ENCODE measurements at regions of chr11 and their contacts with region 1.

Region 1: DNA sequence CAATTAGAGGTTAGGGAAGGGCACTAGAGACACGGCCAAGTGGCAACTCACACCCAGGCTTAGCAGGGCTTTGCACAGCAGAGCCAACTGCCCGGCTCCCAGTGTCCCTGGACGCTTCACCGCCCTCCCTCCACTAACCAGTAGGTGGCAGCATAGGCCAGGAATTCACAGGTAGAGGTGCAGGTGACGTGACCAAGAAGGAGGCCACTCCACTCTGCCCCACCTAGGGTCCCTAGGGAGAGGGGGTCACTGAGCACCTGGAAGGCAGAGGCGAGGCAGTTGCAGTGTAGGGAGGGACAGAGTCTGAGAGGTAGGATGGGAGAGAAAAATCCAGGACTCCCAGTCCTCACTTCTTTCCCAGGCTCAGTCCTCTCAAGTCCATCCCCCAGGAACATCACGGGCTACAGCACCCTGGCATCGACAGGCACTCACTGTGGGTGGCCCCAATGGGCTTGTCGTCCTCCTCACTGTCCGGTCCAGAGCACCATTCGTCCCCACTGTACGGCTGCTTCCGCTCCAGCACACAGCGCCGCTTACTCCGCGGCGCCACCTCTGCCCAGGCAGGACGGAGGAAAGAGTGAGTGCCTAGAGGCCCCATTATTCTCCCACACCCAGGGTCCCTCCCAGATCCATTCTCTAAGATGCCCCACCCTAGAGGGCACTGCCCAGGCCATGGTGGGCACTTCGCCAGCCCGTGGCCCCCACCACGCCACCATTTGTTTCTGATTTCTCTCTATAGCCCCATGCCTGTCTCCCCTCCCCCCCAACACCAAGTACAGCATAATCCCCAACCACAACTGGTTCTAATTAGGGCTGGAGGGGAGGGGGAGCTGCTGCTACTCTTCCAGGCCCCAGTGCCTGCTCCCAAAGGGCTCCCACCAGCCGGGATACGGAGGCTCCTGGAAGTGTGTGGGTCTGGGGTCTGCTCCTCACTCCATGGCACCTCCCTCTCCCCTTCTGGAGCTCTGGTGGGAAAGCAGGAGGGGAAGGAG is 18.4 kb downstream of the BCL9L start:
- DNase-seq: peak; percentile 73 to 91 (median 82)
- ATAC-seq: peak; percentile 83
- H3K4me3 ChIP-seq: no peak overlapping the region
- H3K4me3 Mint-ChIP-seq: peak overlapping the region in 9 of 10 donors; percentile 15 to 99 (median 56)
- H3K27ac ChIP-seq: peak overlapping the region; percentile 96
- H3K27ac Mint-ChIP-seq: peak overlapping the region; percentile 80 to 96 (median 93)
- H3K4me1 ChIP-seq: peaks cover 28 to 50% of the 10 kb centered on the region in 2 donors
- H3K4me1 Mint-ChIP-seq: peaks cover 30 to 53% (median 46%) of the 10 kb centered on the region in 7 donors
- H3K27me3 ChIP-seq: no peaks in the 10 kb centered on the region
- H3K27me3 Mint-ChIP-seq: no peaks in the 10 kb centered on the region

Region 2: GRCh38 chr11:118033443-118033842 is 873.9 kb before region 1 on chr11:
- CTCF ChIA-PET with region 1: no interaction called
- POLR2A ChIA-PET with region 1: no interaction called
- intact Hi-C with region 1: no loop called
- DNase-seq: no peak
- ATAC-seq: no peak
- H3K4me3 ChIP-seq: no peak overlapping the region
- H3K4me3 Mint-ChIP-seq: no peak overlapping the region
- H3K27ac ChIP-seq: no peak overlapping the region
- H3K27ac Mint-ChIP-seq: peak overlapping the region in 2 of 9 donors; percentile 63 to 70
- H3K4me1 ChIP-seq: peaks cover 0 to 12% of the 10 kb centered on the region in 2 donors
- H3K4me1 Mint-ChIP-seq: peaks cover 11 to 36% (median 18%) of the 10 kb centered on the region in 7 donors
- H3K27me3 ChIP-seq: no peaks in the 10 kb centered on the region
- H3K27me3 Mint-ChIP-seq: peaks cover 0 to 4% (median 0%) of the 10 kb centered on the region in 5 donors

Region 3: GRCh38 chr11:118705111-118705741 is 202.1 kb before region 1 on chr11:
- CTCF ChIA-PET with region 1: no interaction called
- POLR2A ChIA-PET with region 1: interaction called, 12 read pairs
- intact Hi-C with region 1: no loop called
- DNase-seq: peak in 7 of 9 donors; percentile 50 to 72 (median 63)
- ATAC-seq: peak; percentile 79
- H3K4me3 ChIP-seq: no peak overlapping the region
- H3K4me3 Mint-ChIP-seq: peak overlapping the region; percentile 67 to 84 (median 76)
- H3K27ac ChIP-seq: peak overlapping the region; percentile 62
- H3K27ac Mint-ChIP-seq: peak overlapping the region; percentile 49 to 99 (median 95)
- H3K4me1 ChIP-seq: peaks cover 28 to 41% of the 10 kb centered on the region in 2 donors
- H3K4me1 Mint-ChIP-seq: peaks cover 20 to 63% (median 47%) of the 10 kb centered on the region in 7 donors
- H3K27me3 ChIP-seq: no peaks in the 10 kb centered on the region
- H3K27me3 Mint-ChIP-seq: peaks cover 0 to 8% (median 0%) of the 10 kb centered on the region in 5 donors

Region 4: GRCh38 chr11:118820412-118821357 is 86.7 kb before region 1 on chr11:
- CTCF ChIA-PET with region 1: no interaction called
- POLR2A ChIA-PET with region 1: no interaction called
- intact Hi-C with region 1: no loop called
- DNase-seq: no peak
- ATAC-seq: peak; percentile 55
- H3K4me3 ChIP-seq: no peak overlapping the region
- H3K4me3 Mint-ChIP-seq: peak overlapping the region in 2 of 10 donors; percentile 9 to 13
- H3K27ac ChIP-seq: no peak overlapping the region
- H3K27ac Mint-ChIP-seq: peak overlapping the region in 1 of 9 donors; percentile 25
- H3K4me1 ChIP-seq: no peaks in the 10 kb centered on the region
- H3K4me1 Mint-ChIP-seq: peaks cover 0 to 4% (median 0%) of the 10 kb centered on the region in 7 donors
- H3K27me3 ChIP-seq: no peaks in the 10 kb centered on the region
- H3K27me3 Mint-ChIP-seq: no peaks in the 10 kb centered on the region

Region 5: GRCh38 chr11:118870396-118871345 is 36.7 kb before region 1 on chr11:
- CTCF ChIA-PET with region 1: interaction called, 4 read pairs
- POLR2A ChIA-PET with region 1: interaction called, 28 read pairs
- intact Hi-C with region 1: no loop called
- DNase-seq: peak in 6 of 9 donors; percentile 44 to 54 (median 51)
- ATAC-seq: peak; percentile 28
- H3K4me3 ChIP-seq: peak overlapping the region; percentile 60
- H3K4me3 Mint-ChIP-seq: peak overlapping the region; percentile 67 to 91 (median 82)
- H3K27ac ChIP-seq: peak overlapping the region; percentile 94
- H3K27ac Mint-ChIP-seq: peak overlapping the region; percentile 94 to 100 (median 99)
- H3K4me1 ChIP-seq: peaks cover 51 to 58% of the 10 kb centered on the region in 2 donors
- H3K4me1 Mint-ChIP-seq: peaks cover 29 to 61% (median 57%) of the 10 kb centered on the region in 7 donors
- H3K27me3 ChIP-seq: no peaks in the 10 kb centered on the region
- H3K27me3 Mint-ChIP-seq: no peaks in the 10 kb centered on the region

Region 6: DNA sequence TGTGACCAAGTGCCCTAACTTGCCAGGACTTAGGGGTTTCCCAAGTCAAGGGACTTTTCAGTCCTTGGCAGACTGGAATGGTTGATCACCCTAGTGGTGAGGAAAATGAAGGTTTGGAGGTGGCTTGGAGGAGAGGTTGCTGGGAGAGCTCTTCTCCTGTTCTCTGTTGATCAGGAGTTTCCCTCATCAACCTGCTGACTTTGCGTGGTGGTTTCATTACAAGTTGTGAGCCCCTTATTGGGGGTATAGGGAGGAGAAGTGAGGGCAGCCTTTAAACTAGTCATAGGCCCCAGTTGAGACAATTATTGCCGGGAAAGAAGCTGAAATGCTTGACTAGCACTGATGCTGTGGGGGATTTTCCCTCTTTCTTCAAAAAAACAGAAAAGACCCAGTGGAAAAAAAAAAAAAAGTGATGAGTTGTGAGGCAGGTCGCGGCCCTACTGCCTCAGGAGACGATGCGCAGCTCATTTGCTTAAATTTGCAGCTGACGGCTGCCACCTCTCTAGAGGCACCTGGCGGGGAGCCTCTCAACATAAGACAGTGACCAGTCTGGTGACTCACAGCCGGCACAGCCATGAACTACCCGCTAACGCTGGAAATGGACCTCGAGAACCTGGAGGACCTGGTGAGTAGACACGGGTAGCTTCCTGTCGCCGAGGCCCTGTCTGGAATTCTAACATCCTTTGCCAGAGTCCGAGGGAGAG is 23.8 kb before region 1 on chr11 and contains the start of gene CXCR5:
- CTCF ChIA-PET with region 1: no interaction called
- POLR2A ChIA-PET with region 1: interaction called, 34 read pairs
- intact Hi-C with region 1: no loop called
- DNase-seq: peak in 1 of 9 donors; percentile 44
- ATAC-seq: peak; percentile 70
- H3K4me3 ChIP-seq: peak within 1 kb of the TSS; percentile 21
- H3K4me3 Mint-ChIP-seq: peak within 1 kb of the TSS in 9 of 10 donors; percentile 29 to 78 (median 50)
- H3K27ac ChIP-seq: peak within 1 kb of the TSS; percentile 7
- H3K27ac Mint-ChIP-seq: peak within 1 kb of the TSS; percentile 61 to 89 (median 76)
- H3K4me1 ChIP-seq: peaks cover 24 to 51% of the 10 kb centered on the region in 2 donors
- H3K4me1 Mint-ChIP-seq: peaks cover 51 to 90% (median 79%) of the 10 kb centered on the region in 7 donors
- H3K27me3 ChIP-seq: no peaks in the 10 kb centered on the region
- H3K27me3 Mint-ChIP-seq: no peaks in the 10 kb centered on the region
- total RNA-seq, gene CXCR5: 0.41 to 2.9 (median 2.1) TPM

Region 7: GRCh38 chr11:118895142-118896039 is 12.0 kb before region 1 on chr11:
- CTCF ChIA-PET with region 1: interaction called, 9 read pairs
- POLR2A ChIA-PET with region 1: interaction called, 30 read pairs
- intact Hi-C with region 1: no loop called
- DNase-seq: peak; percentile 54 to 87 (median 81)
- ATAC-seq: peak; percentile 86
- H3K4me3 ChIP-seq: peak overlapping the region; percentile 22
- H3K4me3 Mint-ChIP-seq: peak overlapping the region; percentile 76 to 86 (median 81)
- H3K27ac ChIP-seq: peak overlapping the region; percentile 94
- H3K27ac Mint-ChIP-seq: peak overlapping the region; percentile 94 to 99 (median 97)
- H3K4me1 ChIP-seq: peaks cover 64 to 67% of the 10 kb centered on the region in 2 donors
- H3K4me1 Mint-ChIP-seq: peaks cover 59 to 78% (median 71%) of the 10 kb centered on the region in 7 donors
- H3K27me3 ChIP-seq: no peaks in the 10 kb centered on the region
- H3K27me3 Mint-ChIP-seq: no peaks in the 10 kb centered on the region

Region 8: DNA sequence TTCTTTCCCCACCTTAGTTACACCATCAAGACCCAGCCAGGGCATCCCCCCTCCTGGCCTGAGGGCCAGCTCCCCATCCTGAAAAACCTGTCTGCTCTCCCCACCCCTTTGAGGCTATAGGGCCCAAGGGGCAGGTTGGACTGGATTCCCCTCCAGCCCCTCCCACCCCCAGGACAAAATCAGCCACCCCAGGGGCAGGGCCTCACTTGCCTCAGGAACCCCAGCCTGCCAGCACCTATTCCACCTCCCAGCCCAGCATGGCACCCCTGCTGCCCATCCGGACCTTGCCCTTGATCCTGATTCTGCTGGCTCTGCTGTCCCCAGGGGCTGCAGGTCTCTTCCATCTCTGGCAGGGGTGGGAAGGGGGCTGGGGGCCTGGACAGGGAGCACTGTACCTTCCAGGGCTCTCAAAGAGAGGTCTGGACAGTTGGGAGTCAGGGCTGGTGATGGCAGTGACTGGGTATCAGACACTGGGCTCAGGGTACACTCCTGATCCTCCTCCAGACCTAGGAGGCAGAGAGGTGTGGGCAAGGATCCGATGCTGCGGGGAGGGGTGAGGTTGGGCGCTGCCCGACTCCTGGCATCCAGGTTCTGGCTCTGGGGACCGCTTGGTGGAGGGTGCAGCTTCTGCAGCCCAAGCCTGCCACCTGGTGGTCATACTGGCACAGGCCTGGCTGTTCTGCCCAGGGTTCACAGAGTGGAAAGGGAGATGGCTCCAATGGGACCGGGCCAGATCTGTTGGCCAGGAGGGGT is 48.9 kb after region 1 on chr11 and contains the start of gene UPK2:
- CTCF ChIA-PET with region 1: interaction called, 11 read pairs
- POLR2A ChIA-PET with region 1: interaction called, 3 read pairs
- intact Hi-C with region 1: loop called (anchors 1 kb)
- DNase-seq: peak; percentile 74 to 91 (median 83)
- ATAC-seq: peak; percentile 99
- H3K4me3 ChIP-seq: no peak within 1 kb of the TSS
- H3K4me3 Mint-ChIP-seq: peak within 1 kb of the TSS in 1 of 10 donors; percentile 49
- H3K27ac ChIP-seq: no peak within 1 kb of the TSS
- H3K27ac Mint-ChIP-seq: peak within 1 kb of the TSS in 8 of 9 donors; percentile 2 to 77 (median 54)
- H3K4me1 ChIP-seq: no peaks in the 10 kb centered on the region
- H3K4me1 Mint-ChIP-seq: peaks cover 0 to 11% (median 5%) of the 10 kb centered on the region in 7 donors
- H3K27me3 ChIP-seq: no peaks in the 10 kb centered on the region
- H3K27me3 Mint-ChIP-seq: peaks cover 0 to 31% (median 0%) of the 10 kb centered on the region in 5 donors
- total RNA-seq, gene UPK2: 0.24 TPM in 1 of 5 experiments, not detected in the others

Region 9: DNA sequence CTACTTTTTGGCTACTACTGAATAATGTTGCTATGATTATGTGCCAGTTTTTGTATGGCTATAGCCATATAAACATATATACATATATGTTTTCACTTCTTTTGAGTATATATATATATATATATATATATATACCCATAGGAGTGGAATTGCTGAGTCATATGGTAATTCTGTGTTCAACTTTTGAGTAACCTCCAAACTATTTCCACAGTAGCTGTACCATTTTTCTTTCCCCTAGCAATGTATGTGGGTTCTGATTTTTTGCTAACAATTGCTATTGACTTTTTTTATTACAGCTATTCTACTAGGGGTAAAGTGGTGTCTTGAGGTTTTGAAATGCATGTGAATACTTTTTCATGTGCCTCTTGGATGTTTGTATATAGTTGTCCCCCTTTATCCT is 329.1 kb after region 1 on chr11:
- CTCF ChIA-PET with region 1: no interaction called
- POLR2A ChIA-PET with region 1: no interaction called
- intact Hi-C with region 1: no loop called
- DNase-seq: no peak
- ATAC-seq: no peak
- H3K4me3 ChIP-seq: no peak overlapping the region
- H3K4me3 Mint-ChIP-seq: no peak overlapping the region
- H3K27ac ChIP-seq: no peak overlapping the region
- H3K27ac Mint-ChIP-seq: peak overlapping the region in 5 of 9 donors; percentile 15 to 70 (median 26)
- H3K4me1 ChIP-seq: peaks cover 4 to 24% of the 10 kb centered on the region in 2 donors
- H3K4me1 Mint-ChIP-seq: peaks cover 29 to 74% (median 60%) of the 10 kb centered on the region in 7 donors
- H3K27me3 ChIP-seq: no peaks in the 10 kb centered on the region
- H3K27me3 Mint-ChIP-seq: no peaks in the 10 kb centered on the region